ENCODE measurements at regions of chr4 and their contacts with region 1.

Region 1: DNA sequence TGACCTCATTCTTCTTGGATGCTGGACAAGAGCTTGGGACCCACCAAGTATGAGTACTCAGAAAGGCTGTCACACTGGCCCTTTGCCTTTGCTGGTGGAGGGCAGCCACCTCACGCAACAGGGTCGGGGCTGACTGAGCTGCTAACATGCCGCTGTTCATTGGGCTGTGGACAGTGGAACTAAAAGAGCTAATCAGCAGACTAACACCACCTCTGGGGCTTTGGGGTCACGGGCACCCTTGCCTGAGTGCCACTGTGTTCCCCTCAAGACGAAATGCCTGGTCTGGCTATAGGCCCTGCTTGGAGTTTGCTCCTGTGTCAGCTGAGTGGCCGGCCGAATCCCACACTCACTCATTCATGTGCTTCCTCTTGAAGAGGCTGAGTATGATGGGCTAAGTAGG is 559.6 kb downstream of the SPRY1 start:
- DNase-seq: no peak
- H3K4me3 Mint-ChIP-seq: no peak overlapping the region
- H3K27ac Mint-ChIP-seq: no peak overlapping the region
- H3K4me1 Mint-ChIP-seq: no peaks in the 10 kb centered on the region
- H3K27me3 Mint-ChIP-seq: no peaks in the 10 kb centered on the region
- CTCF ChIP-seq: no peak

Region 2: GRCh38 chr4:124025428-124025827 is 69.2 kb after region 1 on chr4:
- CTCF ChIA-PET with region 1: no interaction called
- intact Hi-C with region 1: loop called (anchors 2 kb)
- DNase-seq: no peak
- H3K4me3 Mint-ChIP-seq: no peak overlapping the region
- H3K27ac Mint-ChIP-seq: no peak overlapping the region
- H3K4me1 Mint-ChIP-seq: no peaks in the 10 kb centered on the region
- H3K27me3 Mint-ChIP-seq: no peaks in the 10 kb centered on the region
- CTCF ChIP-seq: no peak

Region 3: GRCh38 chr4:124219389-124219788 is 263.2 kb after region 1 on chr4:
- CTCF ChIA-PET with region 1: no interaction called
- intact Hi-C with region 1: no loop called
- DNase-seq: no peak
- H3K4me3 Mint-ChIP-seq: no peak overlapping the region
- H3K27ac Mint-ChIP-seq: no peak overlapping the region
- H3K4me1 Mint-ChIP-seq: peaks cover 13% of the 10 kb centered on the region
- H3K27me3 Mint-ChIP-seq: no peaks in the 10 kb centered on the region
- CTCF ChIP-seq: no peak

Measured in Calu3 (cell line).